Panc1 (cell line): ENCODE measurements at regions of chr4 and their contacts with region 1.

Region 1: GRCh38 chr4:100294356-100294755 is 104.1 kb upstream of the DDIT4L start:
- DNase-seq: no peak
- ATAC-seq: no peak
- H3K4me3 ChIP-seq: no peak overlapping the region
- H3K27ac ChIP-seq: no peak overlapping the region
- H3K4me1 ChIP-seq: no peaks in the 10 kb centered on the region
- H3K27me3 ChIP-seq: no peaks in the 10 kb centered on the region
- CTCF ChIP-seq: no peak

Region 2: DNA sequence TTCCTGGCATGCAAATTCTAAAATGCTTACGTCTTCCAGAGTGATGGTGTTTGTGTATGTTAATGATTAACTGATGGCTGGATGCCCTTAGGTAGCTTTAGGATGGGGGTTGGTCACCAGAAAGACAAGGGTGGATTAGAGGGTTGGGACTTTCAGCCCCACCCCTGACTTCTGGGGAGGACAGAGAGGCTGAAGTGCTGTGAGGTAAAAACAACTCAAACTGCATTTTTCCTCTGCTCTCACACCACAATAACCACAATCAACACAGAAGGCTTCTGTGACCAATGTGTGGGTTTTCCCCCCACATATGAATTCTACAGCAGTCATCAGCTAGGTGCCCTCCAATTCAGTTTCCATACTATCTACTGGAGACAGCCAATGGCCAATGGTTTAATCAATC is 85.4 kb before region 1 on chr4:
- CTCF ChIA-PET with region 1: no interaction called
- POLR2A ChIA-PET with region 1: no interaction called
- in situ Hi-C with region 1: no loop called
- intact Hi-C with region 1: no loop called
- DNase-seq: no peak
- ATAC-seq: no peak
- H3K4me3 ChIP-seq: no peak overlapping the region
- H3K27ac ChIP-seq: no peak overlapping the region
- H3K4me1 ChIP-seq: no peaks in the 10 kb centered on the region
- H3K27me3 ChIP-seq: no peaks in the 10 kb centered on the region
- CTCF ChIP-seq: no peak

Region 3: GRCh38 chr4:100312615-100313350 is 18.4 kb after region 1 on chr4:
- CTCF ChIA-PET with region 1: interaction called, 15 read pairs
- POLR2A ChIA-PET with region 1: no interaction called
- in situ Hi-C with region 1: no loop called
- intact Hi-C with region 1: no loop called
- DNase-seq: no peak
- ATAC-seq: no peak
- H3K4me3 ChIP-seq: no peak overlapping the region
- H3K27ac ChIP-seq: no peak overlapping the region
- H3K4me1 ChIP-seq: no peaks in the 10 kb centered on the region
- H3K27me3 ChIP-seq: no peaks in the 10 kb centered on the region
- CTCF ChIP-seq: no peak

Region 4: GRCh38 chr4:100494166-100494825 is 199.9 kb after region 1 on chr4:
- CTCF ChIA-PET with region 1: no interaction called
- POLR2A ChIA-PET with region 1: no interaction called
- in situ Hi-C with region 1: no loop called
- intact Hi-C with region 1: no loop called
- DNase-seq: no peak
- ATAC-seq: no peak
- H3K4me3 ChIP-seq: no peak overlapping the region
- H3K27ac ChIP-seq: no peak overlapping the region
- H3K4me1 ChIP-seq: no peaks in the 10 kb centered on the region
- H3K27me3 ChIP-seq: no peaks in the 10 kb centered on the region
- CTCF ChIP-seq: no peak